Mammary epithelial cell (primary cell): ENCODE measurements at regions of chr3 and their contacts with region 1.

Region 1: DNA sequence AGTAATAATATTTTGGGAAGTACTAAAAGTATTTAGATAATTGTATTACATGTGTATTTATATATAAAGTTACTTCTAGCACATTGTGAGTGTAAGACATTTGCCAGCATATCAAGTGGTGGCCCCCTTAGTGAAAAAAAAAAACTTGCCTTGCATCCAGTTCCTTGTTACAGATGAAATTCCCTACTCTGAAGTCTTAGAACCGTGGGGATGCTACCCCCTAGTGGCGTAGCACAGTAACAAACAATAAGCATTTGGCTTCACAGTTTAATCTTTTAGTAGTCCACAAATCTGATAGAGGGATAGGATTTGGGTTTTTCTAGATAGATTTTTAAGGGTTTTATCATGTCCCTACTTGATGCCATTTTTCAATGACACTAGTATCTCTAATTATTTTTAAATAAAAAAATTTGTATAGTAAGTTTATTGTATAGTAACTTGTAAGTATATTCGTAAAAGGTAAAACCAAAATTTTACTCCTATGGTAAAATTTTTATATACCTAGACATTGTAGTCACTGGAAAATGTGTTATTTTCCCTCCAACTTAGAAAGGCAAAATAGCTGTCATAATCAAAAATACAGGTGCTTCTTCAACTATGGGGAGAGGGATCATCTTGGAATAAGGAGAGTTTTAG is 14.3 kb downstream of the SMC4 start:
- DNase-seq: peak; percentile 54
- H3K4me3 ChIP-seq: no peak overlapping the region
- H3K27ac ChIP-seq: no peak overlapping the region
- H3K4me1 ChIP-seq: no peaks in the 10 kb centered on the region
- H3K27me3 ChIP-seq: no peaks in the 10 kb centered on the region
- CTCF ChIP-seq: peak; percentile 85 to 90

Region 2: GRCh38 chr3:158845765-158846350 is 1567.9 kb before region 1 on chr3:
- CTCF ChIA-PET with region 1: no interaction called
- dilution Hi-C with region 1: no loop called
- in situ Hi-C with region 1: no loop called
- intact Hi-C with region 1: no loop called
- DNase-seq: no peak
- H3K4me3 ChIP-seq: no peak overlapping the region
- H3K27ac ChIP-seq: no peak overlapping the region
- H3K4me1 ChIP-seq: no peaks in the 10 kb centered on the region
- H3K27me3 ChIP-seq: peaks cover 2% of the 10 kb centered on the region
- CTCF ChIP-seq: peak; percentile 52 to 69

Region 3: GRCh38 chr3:159032311-159032710 is 1381.4 kb before region 1 on chr3:
- CTCF ChIA-PET with region 1: no interaction called
- dilution Hi-C with region 1: no loop called
- in situ Hi-C with region 1: no loop called
- intact Hi-C with region 1: no loop called
- DNase-seq: peak; percentile 70
- H3K4me3 ChIP-seq: no peak overlapping the region
- H3K27ac ChIP-seq: no peak overlapping the region
- H3K4me1 ChIP-seq: no peaks in the 10 kb centered on the region
- H3K27me3 ChIP-seq: no peaks in the 10 kb centered on the region
- CTCF ChIP-seq: no peak

Region 4: GRCh38 chr3:160444413-160444812 is 30.7 kb after region 1 on chr3:
- CTCF ChIA-PET with region 1: no interaction called
- dilution Hi-C with region 1: loop called (anchors 5 kb)
- in situ Hi-C with region 1: no loop called
- intact Hi-C with region 1: no loop called
- DNase-seq: no peak
- H3K4me3 ChIP-seq: no peak overlapping the region
- H3K27ac ChIP-seq: no peak overlapping the region
- H3K4me1 ChIP-seq: peaks cover 3% of the 10 kb centered on the region
- H3K27me3 ChIP-seq: no peaks in the 10 kb centered on the region
- CTCF ChIP-seq: no peak